Activated naive CD4-positive, alpha-beta T cell treated with anti-CD3 and anti-CD28 coated beads for 36 hours (primary cell): ENCODE measurements at regions of chr1 and their contacts with region 1.

Region 1: GRCh38 chr1:92960395-92961130 is 699 bp downstream of the DIPK1A start:
- DNase-seq: peak; percentile 76
- H3K4me3 Mint-ChIP-seq: peak overlapping the region; percentile 89
- H3K27ac Mint-ChIP-seq: peak overlapping the region; percentile 94
- H3K4me1 Mint-ChIP-seq: peaks cover 41% of the 10 kb centered on the region
- H3K27me3 Mint-ChIP-seq: no peaks in the 10 kb centered on the region

Region 2: GRCh38 chr1:92583821-92584760 is 376.5 kb before region 1 on chr1:
- CTCF ChIA-PET with region 1: no interaction called
- intact Hi-C with region 1: loop called (anchors 5 kb)
- DNase-seq: no peak
- H3K4me3 Mint-ChIP-seq: peak overlapping the region; percentile 45
- H3K27ac Mint-ChIP-seq: peak overlapping the region; percentile 88
- H3K4me1 Mint-ChIP-seq: peaks cover 72% of the 10 kb centered on the region
- H3K27me3 Mint-ChIP-seq: no peaks in the 10 kb centered on the region

Region 3: DNA sequence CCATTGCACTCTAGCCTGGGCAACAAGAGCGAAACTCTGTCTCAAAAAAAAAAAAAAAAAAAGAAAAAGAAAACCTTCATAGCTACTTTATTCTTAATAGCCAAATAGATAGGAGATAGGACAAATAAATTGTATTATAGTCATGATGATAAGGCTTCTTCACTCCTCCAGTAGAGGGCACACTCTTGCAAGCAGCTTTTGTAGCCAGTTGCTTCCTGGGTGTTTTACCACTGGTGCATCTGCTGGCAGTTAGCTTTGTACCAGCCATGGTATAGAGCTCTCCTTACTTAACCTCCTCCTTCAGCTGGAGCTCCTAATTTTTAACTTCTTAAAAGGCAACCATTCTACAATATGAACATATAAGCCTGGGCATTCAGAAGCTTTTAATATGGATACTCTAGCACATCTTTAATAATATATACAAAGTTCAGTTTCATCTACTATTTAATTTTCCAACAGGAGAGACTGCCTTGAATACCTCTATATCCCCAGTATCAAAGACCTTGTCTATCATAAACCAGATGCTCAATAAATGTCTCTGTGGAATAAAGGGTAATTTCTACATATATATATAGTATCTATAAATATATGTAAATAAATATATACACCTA is 211.4 kb before region 1 on chr1:
- CTCF ChIA-PET with region 1: interaction called, 3 read pairs
- intact Hi-C with region 1: loop called (anchors 1 kb)
- DNase-seq: peak; percentile 60
- H3K4me3 Mint-ChIP-seq: no peak overlapping the region
- H3K27ac Mint-ChIP-seq: no peak overlapping the region
- H3K4me1 Mint-ChIP-seq: no peaks in the 10 kb centered on the region
- H3K27me3 Mint-ChIP-seq: no peaks in the 10 kb centered on the region

Region 4: DNA sequence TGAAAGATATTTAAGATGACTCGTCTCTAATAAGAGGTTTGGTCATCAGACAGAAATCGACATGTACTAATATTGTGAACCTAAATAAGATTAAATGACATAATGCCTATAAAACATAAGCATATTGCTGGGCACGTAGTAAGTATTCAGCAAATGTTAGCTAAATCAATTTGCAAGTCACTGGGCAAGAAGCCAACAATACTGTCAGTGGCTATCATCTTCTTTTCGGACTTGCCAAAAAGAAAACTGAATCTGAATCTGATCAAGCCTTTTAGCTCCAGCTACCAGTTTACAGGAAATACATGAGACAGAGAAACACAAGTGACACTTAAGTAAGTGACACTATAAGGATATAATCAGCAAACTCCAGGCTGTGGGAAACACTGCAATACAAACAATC is 82.8 kb before region 1 on chr1:
- CTCF ChIA-PET with region 1: interaction called, 7 read pairs
- intact Hi-C with region 1: loop called (anchors 5 kb)
- DNase-seq: peak; percentile 14
- H3K4me3 Mint-ChIP-seq: peak overlapping the region; percentile 58
- H3K27ac Mint-ChIP-seq: peak overlapping the region; percentile 72
- H3K4me1 Mint-ChIP-seq: peaks cover 27% of the 10 kb centered on the region
- H3K27me3 Mint-ChIP-seq: no peaks in the 10 kb centered on the region

Region 5: DNA sequence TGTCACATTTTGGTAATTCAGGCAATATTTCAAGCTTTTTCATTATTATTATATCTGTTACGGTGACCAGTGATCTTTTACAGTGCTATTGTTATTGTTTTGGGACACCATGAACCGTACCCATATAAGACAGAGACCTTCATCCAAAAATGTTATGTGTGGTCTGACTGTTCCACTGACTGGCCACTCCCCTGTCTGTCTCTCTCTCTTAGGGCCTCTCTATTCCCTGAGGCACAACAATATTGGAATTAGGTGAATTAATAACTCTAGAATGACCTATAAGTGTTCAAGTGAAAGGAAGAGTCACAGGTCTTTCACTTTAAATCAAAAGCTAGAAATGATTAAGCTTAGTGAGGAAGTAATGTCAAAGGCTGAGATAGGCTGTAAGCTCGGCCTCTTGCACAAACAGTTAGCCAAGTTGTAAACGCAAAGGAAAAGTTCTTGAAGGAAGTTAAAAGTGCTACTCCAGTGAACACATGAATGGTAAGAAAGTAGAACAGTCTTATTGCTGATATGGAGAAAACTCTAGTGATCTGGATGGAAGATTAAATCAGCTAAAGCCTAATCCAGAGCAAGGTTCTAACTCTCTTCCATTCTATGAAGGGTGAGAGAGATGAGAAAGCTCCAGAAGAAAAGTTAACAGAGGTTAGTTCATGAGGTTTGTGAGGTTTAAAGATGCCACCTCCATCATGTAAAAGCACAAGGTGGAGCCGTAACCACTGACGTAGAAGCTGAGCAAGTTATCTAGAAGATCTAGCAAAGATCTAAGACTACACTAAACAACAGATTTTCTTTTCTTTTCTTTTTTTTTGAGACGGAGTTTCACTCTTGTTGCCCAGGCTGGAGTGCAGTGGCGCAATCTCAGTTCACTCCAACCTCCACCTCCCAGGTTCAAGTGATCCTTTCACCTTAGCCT is 20.4 kb after region 1 on chr1:
- CTCF ChIA-PET with region 1: interaction called, 12 read pairs
- intact Hi-C with region 1: loop called (anchors 1 kb)
- DNase-seq: peak; percentile 55
- H3K4me3 Mint-ChIP-seq: peak overlapping the region; percentile 70
- H3K27ac Mint-ChIP-seq: peak overlapping the region; percentile 98
- H3K4me1 Mint-ChIP-seq: peaks cover 60% of the 10 kb centered on the region
- H3K27me3 Mint-ChIP-seq: no peaks in the 10 kb centered on the region

Region 6: GRCh38 chr1:93000751-93001175 is 40.2 kb after region 1 on chr1:
- CTCF ChIA-PET with region 1: interaction called, 10 read pairs
- intact Hi-C with region 1: loop called (anchors 2 kb)
- DNase-seq: no peak
- H3K4me3 Mint-ChIP-seq: no peak overlapping the region
- H3K27ac Mint-ChIP-seq: no peak overlapping the region
- H3K4me1 Mint-ChIP-seq: peaks cover 3% of the 10 kb centered on the region
- H3K27me3 Mint-ChIP-seq: no peaks in the 10 kb centered on the region